Activated T-helper 2 cell treated with anti-CD3 and anti-CD28 coated beads, Interferon-gamma antibody, Interleukin-2, Interleukin-4, amounts not matched to agents 10 μg/mL and 5 μg/mL and 100 μg/mL, durations not matched to agents 14 hours and 24 hours and 36 hours (primary cell): ENCODE measurements at regions of chrX and their contacts with region 1.

Region 1: GRCh38 chrX:16695079-16695676 is 17.3 kb downstream of the CTPS2 start:
- DNase-seq: peak; percentile 16
- H3K4me3 Mint-ChIP-seq: no peak overlapping the region
- H3K27ac Mint-ChIP-seq: no peak overlapping the region
- H3K4me1 Mint-ChIP-seq: no peaks in the 10 kb centered on the region
- H3K27me3 Mint-ChIP-seq: no peaks in the 10 kb centered on the region

Region 2: GRCh38 chrX:16436348-16437188 is 258.6 kb before region 1 on chrX:
- intact Hi-C with region 1: loop called (anchors 2 kb)
- DNase-seq: peak; percentile 26
- H3K4me3 Mint-ChIP-seq: no peak overlapping the region
- H3K27ac Mint-ChIP-seq: no peak overlapping the region
- H3K4me1 Mint-ChIP-seq: peaks cover 3% of the 10 kb centered on the region
- H3K27me3 Mint-ChIP-seq: no peaks in the 10 kb centered on the region